ENCODE measurements at regions of chr6 and their contacts with region 1.

Region 1: DNA sequence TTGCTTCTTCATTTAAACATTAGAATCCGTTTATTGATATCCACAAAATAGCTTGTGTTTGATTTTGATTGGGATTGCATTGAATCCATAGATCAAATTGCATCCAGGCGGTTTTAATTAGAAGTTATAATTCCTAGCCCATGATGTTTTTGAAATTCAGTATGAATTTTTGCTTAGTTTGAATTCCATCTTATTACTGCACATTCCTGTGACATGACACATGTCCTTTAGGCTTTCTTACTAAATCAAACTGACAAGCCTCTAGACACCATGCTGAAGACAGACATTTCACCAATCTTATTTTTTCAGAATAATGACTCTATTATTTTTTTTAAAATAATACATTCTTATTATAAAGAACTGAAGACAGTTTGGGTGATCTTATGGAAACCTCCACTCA is 21.4 kb upstream of the PI16 start:
- DNase-seq: no peak
- H3K4me3 Mint-ChIP-seq: no peak overlapping the region
- H3K27ac Mint-ChIP-seq: no peak overlapping the region
- H3K4me1 Mint-ChIP-seq: no peaks in the 10 kb centered on the region
- H3K27me3 Mint-ChIP-seq: peaks cover 15% of the 10 kb centered on the region

Region 2: DNA sequence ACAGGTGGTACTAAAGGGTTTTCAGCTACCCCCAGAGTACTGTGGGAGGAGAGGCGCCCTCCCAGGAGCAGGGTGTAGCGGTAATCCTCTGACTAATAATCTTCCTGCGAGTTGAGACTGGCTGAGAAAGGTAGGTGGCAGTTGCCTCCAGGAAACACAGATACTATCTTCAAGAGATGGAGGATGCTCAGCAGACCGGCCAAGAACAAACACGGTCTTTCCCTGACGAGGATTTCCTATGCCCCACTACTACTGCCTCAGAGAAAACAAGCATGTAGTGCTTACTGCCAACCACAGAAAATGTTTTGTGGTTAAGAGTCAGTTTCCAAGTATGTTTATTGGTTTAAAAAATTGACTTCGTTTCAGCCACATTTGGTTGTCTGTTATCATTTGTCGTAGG is 20.5 kb before region 1 on chr6:
- intact Hi-C with region 1: no loop called
- DNase-seq: peak; percentile 72
- H3K4me3 Mint-ChIP-seq: peak overlapping the region; percentile 79
- H3K27ac Mint-ChIP-seq: peak overlapping the region; percentile 94
- H3K4me1 Mint-ChIP-seq: peaks cover 57% of the 10 kb centered on the region
- H3K27me3 Mint-ChIP-seq: no peaks in the 10 kb centered on the region

Region 3: GRCh38 chr6:36955671-36956445 is 22.8 kb after region 1 on chr6:
- intact Hi-C with region 1: loop called (anchors 2 kb)
- DNase-seq: no peak
- H3K4me3 Mint-ChIP-seq: no peak overlapping the region
- H3K27ac Mint-ChIP-seq: no peak overlapping the region
- H3K4me1 Mint-ChIP-seq: peaks cover 51% of the 10 kb centered on the region
- H3K27me3 Mint-ChIP-seq: peaks cover 2% of the 10 kb centered on the region

Region 4: DNA sequence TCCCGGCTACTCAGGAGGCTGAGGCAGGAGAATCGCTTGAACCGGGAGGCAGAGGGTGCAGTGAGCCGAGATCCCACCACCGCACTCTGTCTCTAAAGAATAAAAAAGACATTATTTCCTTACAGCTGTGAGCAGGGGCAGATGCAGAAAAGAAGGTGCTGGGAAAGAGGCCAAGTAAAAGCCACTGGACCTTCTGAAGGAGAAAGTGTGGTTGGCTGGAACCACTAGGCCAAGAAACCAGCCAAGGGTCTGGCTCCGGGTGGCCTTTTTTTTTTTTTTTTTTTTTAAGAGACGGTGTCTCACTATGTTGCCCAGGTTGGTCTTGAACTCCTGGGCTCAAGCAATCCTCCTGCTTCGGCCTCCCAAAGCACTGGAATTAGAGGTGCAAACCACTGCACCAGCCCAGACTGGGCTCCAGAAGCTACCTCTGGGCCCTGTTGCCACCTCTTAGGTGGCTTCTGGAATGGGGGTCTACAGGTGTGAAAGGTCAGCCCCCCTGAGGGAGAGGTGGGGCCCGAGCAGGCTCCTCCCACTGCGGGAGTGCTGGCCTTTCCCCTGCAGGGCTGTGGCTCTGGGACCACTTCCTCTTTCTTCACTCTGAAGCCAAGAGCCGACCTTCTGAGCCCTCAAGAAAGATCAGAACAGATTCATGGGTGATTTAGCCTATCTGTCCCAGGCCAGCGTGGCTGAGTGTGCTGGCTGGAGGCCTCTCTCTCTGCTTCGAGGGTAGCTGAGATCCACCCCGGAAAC is 72.1 kb after region 1 on chr6 and contains the start of gene FGD2:
- intact Hi-C with region 1: no loop called
- DNase-seq: no peak
- H3K4me3 Mint-ChIP-seq: no peak within 1 kb of the TSS
- H3K27ac Mint-ChIP-seq: peak within 1 kb of the TSS; percentile 32
- H3K4me1 Mint-ChIP-seq: peaks cover 14% of the 10 kb centered on the region
- H3K27me3 Mint-ChIP-seq: no peaks in the 10 kb centered on the region
- total RNA-seq, gene FGD2: 0.65 and 1.5 TPM in 2 replicates

Measured in activated T-helper 1 cell treated with anti-CD3 and anti-CD28 coated beads, Interleukin-12 subunit alpha, Interleukin-12 subunit beta, Interleukin-2, Interleukin-4 antibody, amounts not matched to agents 30 ng/mL and 10 ng/mL and 1 ng/mL, durations not matched to agents 14 hours and 24 hours and 36 hours (primary cell).